ENCODE measurements at regions of chr17 and their contacts with region 1.

Region 1: GRCh38 chr17:82022981-82023374 is at the start of gene LRRC45:
- DNase-seq: peak; percentile 99
- H3K4me3 ChIP-seq: peak within 1 kb of the TSS; percentile 62 to 96 (median 82)
- H3K4me3 Mint-ChIP-seq: peak within 1 kb of the TSS; percentile 80 to 88
- H3K27ac ChIP-seq: peak within 1 kb of the TSS in 1 of 2 donors; percentile 70
- H3K27ac Mint-ChIP-seq: peak within 1 kb of the TSS in 4 of 7 donors; percentile 22 to 75 (median 68)
- H3K4me1 ChIP-seq: peaks cover 26 to 37% of the 10 kb centered on the region in 2 donors
- H3K4me1 Mint-ChIP-seq: peaks cover 31% of the 10 kb centered on the region
- H3K27me3 ChIP-seq: no peaks in the 10 kb centered on the region
- H3K27me3 Mint-ChIP-seq: peaks cover 0 to 1% (median 1%) of the 10 kb centered on the region in 3 donors
- CTCF ChIP-seq: no peak
- polyA plus RNA-seq, gene LRRC45: 2.6 to 12.2 (median 3.4) TPM

Region 2: GRCh38 chr17:81959362-81960129 is 63.4 kb before region 1 on chr17:
- intact Hi-C with region 1: loop called (anchors 1 to 2 kb)
- DNase-seq: peak; percentile 62 to 83 (median 66)
- H3K4me3 ChIP-seq: peak overlapping the region in 2 of 3 experiments; percentile 14 to 70
- H3K4me3 Mint-ChIP-seq: peak overlapping the region; percentile 60 to 82
- H3K27ac ChIP-seq: no peak overlapping the region
- H3K27ac Mint-ChIP-seq: no peak overlapping the region
- H3K4me1 ChIP-seq: peaks cover 10 to 19% of the 10 kb centered on the region in 2 donors
- H3K4me1 Mint-ChIP-seq: peaks cover 5% of the 10 kb centered on the region
- H3K27me3 ChIP-seq: peaks cover 22 to 52% of the 10 kb centered on the region in 2 donors
- H3K27me3 Mint-ChIP-seq: peaks cover 38 to 67% (median 46%) of the 10 kb centered on the region in 3 donors
- CTCF ChIP-seq: peak; percentile 92

Region 3: DNA sequence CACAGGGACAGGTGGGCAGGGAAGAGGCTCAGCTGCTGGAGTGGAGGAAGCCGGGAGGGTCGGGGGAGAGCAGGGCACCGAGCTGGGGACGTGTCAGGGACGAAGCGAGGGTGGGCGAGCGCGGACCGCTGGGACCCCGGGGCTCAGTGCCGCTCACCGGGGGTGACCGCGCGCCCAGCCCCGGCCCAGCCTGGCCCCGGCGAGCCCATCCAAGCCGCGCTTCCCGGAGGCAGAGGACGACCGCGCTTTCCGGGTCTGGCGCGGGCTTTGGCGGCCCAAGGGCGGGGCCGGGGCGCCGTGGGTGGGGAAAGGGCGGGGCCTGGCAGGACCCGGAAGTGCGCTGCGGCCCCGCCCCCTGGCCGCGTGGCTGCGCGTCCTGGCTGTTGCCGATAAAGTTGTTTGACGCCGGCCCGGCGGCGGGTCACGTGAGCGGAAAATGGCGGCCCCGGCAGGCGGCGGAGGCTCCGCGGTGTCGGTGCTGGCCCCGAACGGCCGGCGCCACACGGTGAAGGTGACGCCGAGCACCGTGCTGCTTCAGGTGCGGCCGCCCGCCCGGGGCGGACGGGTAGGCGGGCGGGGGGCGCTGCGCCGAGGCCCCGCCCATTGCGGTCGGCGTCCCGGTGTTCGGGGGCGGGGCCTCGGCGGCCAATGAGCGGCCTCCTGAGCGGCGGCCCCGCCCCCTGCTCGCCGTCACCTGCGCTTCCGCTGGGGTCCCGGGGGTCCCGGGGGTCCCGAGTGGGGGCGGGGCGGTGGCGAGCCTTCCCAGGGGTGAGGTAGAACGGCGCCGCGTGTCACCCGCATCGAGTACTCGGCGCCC is 45.6 kb before region 1 on chr17 and contains the start of gene ASPSCR1:
- intact Hi-C with region 1: loop called (anchors 1 to 5 kb)
- DNase-seq: peak; percentile 88 to 91 (median 89)
- H3K4me3 ChIP-seq: peak within 1 kb of the TSS; percentile 55 to 80 (median 75)
- H3K4me3 Mint-ChIP-seq: peak within 1 kb of the TSS; percentile 95 to 98
- H3K27ac ChIP-seq: peak within 1 kb of the TSS; percentile 64 to 90
- H3K27ac Mint-ChIP-seq: peak within 1 kb of the TSS; percentile 87 to 97 (median 91)
- H3K4me1 ChIP-seq: peaks cover 20 to 24% of the 10 kb centered on the region in 2 donors
- H3K4me1 Mint-ChIP-seq: peaks cover 34% of the 10 kb centered on the region
- H3K27me3 ChIP-seq: no peaks in the 10 kb centered on the region
- H3K27me3 Mint-ChIP-seq: peaks cover 5 to 7% (median 6%) of the 10 kb centered on the region in 3 donors
- CTCF ChIP-seq: no peak
- polyA plus RNA-seq, gene ASPSCR1: 25.5 to 31.9 (median 25.6) TPM

Region 4: DNA sequence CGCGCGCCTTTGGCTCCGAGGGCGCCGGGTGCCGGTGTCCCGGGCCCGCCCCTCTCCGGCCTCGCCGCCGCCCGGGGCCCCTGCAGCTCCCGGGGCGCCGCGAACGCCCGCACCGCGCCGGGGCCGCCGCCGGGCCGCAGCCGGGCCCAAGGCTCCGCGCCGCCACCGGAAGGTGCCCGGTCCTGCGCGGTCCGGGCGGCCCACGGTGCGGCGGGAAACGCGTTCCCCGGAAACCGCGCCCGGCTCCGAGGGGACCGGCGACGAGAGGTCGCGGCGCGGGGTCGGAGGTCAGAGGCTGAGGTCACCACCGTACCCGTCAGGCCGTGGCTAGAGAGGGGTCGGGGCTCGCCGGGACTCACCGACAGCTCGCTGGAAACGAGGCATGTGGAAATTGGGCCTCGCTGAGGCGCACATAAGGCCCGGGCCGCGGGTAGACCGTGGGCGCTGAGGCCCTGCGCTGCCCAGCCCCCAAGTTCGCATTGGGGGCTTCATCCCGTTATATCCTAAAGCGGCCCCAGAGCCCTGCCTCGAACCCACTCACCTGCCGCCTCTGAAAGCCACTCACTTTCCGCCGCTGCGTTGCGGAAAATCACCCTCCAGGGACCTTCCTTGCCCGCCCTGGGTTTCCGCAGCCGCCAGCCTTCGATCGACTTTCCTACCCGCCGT is 42.8 kb after region 1 on chr17 and contains the start of gene DUS1L:
- intact Hi-C with region 1: no loop called
- DNase-seq: peak; percentile 63 to 74 (median 67)
- H3K4me3 ChIP-seq: peak within 1 kb of the TSS; percentile 72 to 87 (median 75)
- H3K4me3 Mint-ChIP-seq: peak within 1 kb of the TSS; percentile 80 to 81
- H3K27ac ChIP-seq: peak within 1 kb of the TSS; percentile 8 to 79
- H3K27ac Mint-ChIP-seq: peak within 1 kb of the TSS in 6 of 7 donors; percentile 68 to 91 (median 86)
- H3K4me1 ChIP-seq: peaks cover 20 to 29% of the 10 kb centered on the region in 2 donors
- H3K4me1 Mint-ChIP-seq: peaks cover 22% of the 10 kb centered on the region
- H3K27me3 ChIP-seq: no peaks in the 10 kb centered on the region
- H3K27me3 Mint-ChIP-seq: no peaks in the 10 kb centered on the region
- CTCF ChIP-seq: no peak
- polyA plus RNA-seq, gene DUS1L: 23.9 to 175 (median 47.6) TPM

Region 5: DNA sequence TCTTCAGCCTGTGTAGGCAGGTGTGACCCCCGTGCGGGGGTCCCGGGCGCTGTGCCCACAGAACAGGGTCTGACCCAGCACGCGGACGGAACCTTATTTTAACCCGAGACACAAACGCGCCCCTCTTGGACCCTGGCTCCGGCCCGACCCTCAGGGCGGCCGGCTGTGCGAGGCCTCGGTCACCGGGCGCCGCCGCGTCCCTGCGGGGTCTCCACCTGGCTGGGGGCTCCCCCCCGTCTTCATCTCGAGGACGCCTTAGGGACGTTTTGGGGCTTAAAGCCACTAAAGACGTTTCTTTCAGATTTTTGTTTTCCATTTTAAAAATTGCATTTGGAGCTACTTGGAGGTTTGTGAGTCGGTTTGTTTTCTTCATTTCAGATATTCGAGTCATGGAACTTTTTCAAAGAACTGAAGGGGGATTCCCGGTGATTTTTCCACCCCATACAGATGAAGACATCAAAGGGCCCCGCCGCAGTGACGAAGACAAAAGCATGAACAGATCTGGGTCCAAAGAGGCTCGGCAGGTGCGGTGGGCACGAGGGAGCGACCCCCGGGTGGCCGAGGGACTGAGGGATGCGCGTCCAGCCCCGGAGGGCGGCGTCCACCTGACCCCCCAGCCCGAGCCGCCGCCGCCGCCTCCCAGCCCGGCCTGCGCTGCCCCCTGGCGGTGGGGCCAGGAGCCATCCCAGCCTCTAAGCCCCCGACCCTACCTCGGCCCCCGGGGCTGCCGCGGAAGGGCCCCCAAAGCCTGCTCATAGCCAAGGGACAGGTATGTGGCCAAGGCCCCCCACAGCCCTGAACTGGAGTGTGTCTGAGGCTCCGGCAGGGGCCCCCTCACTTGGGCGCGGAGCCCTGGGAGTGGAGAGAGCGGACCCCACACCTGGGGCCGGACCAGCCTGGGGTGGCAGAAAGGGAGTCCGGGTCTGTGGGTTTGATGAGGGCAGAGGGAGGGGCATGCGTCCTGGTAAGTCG is 298.3 kb after region 1 on chr17:
- intact Hi-C with region 1: loop called in 1 of 2 experiments (anchors 10 kb)
- DNase-seq: peak in 2 of 3 donors; percentile 29 to 50
- H3K4me3 ChIP-seq: no peak overlapping the region
- H3K4me3 Mint-ChIP-seq: no peak overlapping the region
- H3K27ac ChIP-seq: no peak overlapping the region
- H3K27ac Mint-ChIP-seq: peak overlapping the region in 1 of 7 donors; percentile 10
- H3K4me1 ChIP-seq: peaks cover 2 to 10% of the 10 kb centered on the region in 2 donors
- H3K4me1 Mint-ChIP-seq: peaks cover 6% of the 10 kb centered on the region
- H3K27me3 ChIP-seq: peaks cover 0 to 9% of the 10 kb centered on the region in 2 donors
- H3K27me3 Mint-ChIP-seq: peaks cover 12 to 29% (median 13%) of the 10 kb centered on the region in 3 donors
- CTCF ChIP-seq: peak; percentile 98

Measured in CD14-positive monocyte (primary cell).